Ovary (tissue), 10 donors: ENCODE measurements at regions of chr15 and their contacts with region 1.

Region 1: DNA sequence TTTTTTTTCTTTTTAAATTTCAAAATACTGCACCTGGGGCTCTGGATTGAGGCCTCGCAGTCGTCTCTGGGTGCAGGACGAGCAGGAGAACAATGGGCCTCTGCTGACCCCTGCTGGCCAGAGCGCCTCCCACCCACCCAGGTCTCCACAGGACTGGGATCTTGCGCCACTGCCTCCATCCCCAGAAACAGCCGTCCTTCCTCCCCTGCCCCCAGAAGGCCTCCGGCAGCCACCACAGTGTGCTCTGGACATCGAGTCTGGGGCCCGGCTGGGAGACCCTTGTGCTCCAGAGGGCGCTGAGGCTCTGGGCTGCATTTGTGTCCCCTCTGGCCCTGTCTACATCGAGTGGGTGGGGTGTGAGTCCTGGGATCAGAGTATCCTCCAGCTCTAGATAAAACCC is 6.6 kb upstream of the ACSBG1 start:
- DNase-seq: peak; percentile 81 to 92 (median 90)
- H3K4me3 ChIP-seq: no peak overlapping the region
- H3K27ac ChIP-seq: no peak overlapping the region
- H3K4me1 ChIP-seq: no peaks in the 10 kb centered on the region
- H3K27me3 ChIP-seq: no peaks in the 10 kb centered on the region
- CTCF ChIP-seq: peak; percentile 23 to 84 (median 76)
- EP300 ChIP-seq: no peak
- POLR2A ChIP-seq: no peak

Region 2: GRCh38 chr15:77959432-77959879 is 281.6 kb before region 1 on chr15:
- intact Hi-C with region 1: loop called in 2 of 4 experiments (anchors 5 to 10 kb)
- DNase-seq: peak; percentile 74 to 88 (median 85)
- H3K4me3 ChIP-seq: no peak overlapping the region
- H3K27ac ChIP-seq: no peak overlapping the region
- H3K4me1 ChIP-seq: peaks cover 2% of the 10 kb centered on the region
- H3K27me3 ChIP-seq: no peaks in the 10 kb centered on the region
- CTCF ChIP-seq: peak; percentile 79 to 91 (median 88)
- EP300 ChIP-seq: no peak
- POLR2A ChIP-seq: no peak

Region 3: GRCh38 chr15:77966540-77967290 is 274.3 kb before region 1 on chr15:
- intact Hi-C with region 1: loop called in 1 of 4 experiments (anchors 10 kb)
- DNase-seq: peak in 2 of 5 donors; percentile 44 to 57
- H3K4me3 ChIP-seq: no peak overlapping the region
- H3K27ac ChIP-seq: no peak overlapping the region
- H3K4me1 ChIP-seq: peaks cover 1% of the 10 kb centered on the region
- H3K27me3 ChIP-seq: no peaks in the 10 kb centered on the region
- CTCF ChIP-seq: peak; percentile 59 to 81 (median 79)
- EP300 ChIP-seq: no peak
- POLR2A ChIP-seq: no peak

Region 4: GRCh38 chr15:78177447-78177873 is 63.5 kb before region 1 on chr15:
- intact Hi-C with region 1: no loop called
- DNase-seq: peak in 1 of 5 donors; percentile 50
- H3K4me3 ChIP-seq: no peak overlapping the region
- H3K27ac ChIP-seq: no peak overlapping the region
- H3K4me1 ChIP-seq: peaks cover 1% of the 10 kb centered on the region
- H3K27me3 ChIP-seq: no peaks in the 10 kb centered on the region
- CTCF ChIP-seq: no peak
- EP300 ChIP-seq: no peak
- POLR2A ChIP-seq: no peak